PC-9 (cell line): ENCODE measurements at regions of chr11 and their contacts with region 1.

Region 1: GRCh38 chr11:78645226-78646202 is 70.8 kb upstream of the NARS2 start:
- DNase-seq: peak; percentile 54 to 76
- H3K4me3 ChIP-seq: no peak overlapping the region
- H3K27ac ChIP-seq: no peak overlapping the region
- H3K4me1 ChIP-seq: no peaks in the 10 kb centered on the region
- H3K27me3 ChIP-seq: peaks cover 76% of the 10 kb centered on the region
- CTCF ChIP-seq: peak; percentile 100

Region 2: GRCh38 chr11:78715639-78716311 is 70.3 kb after region 1 on chr11:
- CTCF ChIA-PET with region 1: interaction called, 7 read pairs
- POLR2A ChIA-PET with region 1: no interaction called
- intact Hi-C with region 1: loop called (anchors 2 kb)
- DNase-seq: peak; percentile 57 to 75
- H3K4me3 ChIP-seq: no peak overlapping the region
- H3K27ac ChIP-seq: no peak overlapping the region
- H3K4me1 ChIP-seq: no peaks in the 10 kb centered on the region
- H3K27me3 ChIP-seq: peaks cover 54% of the 10 kb centered on the region
- CTCF ChIP-seq: peak; percentile 87

Region 3: DNA sequence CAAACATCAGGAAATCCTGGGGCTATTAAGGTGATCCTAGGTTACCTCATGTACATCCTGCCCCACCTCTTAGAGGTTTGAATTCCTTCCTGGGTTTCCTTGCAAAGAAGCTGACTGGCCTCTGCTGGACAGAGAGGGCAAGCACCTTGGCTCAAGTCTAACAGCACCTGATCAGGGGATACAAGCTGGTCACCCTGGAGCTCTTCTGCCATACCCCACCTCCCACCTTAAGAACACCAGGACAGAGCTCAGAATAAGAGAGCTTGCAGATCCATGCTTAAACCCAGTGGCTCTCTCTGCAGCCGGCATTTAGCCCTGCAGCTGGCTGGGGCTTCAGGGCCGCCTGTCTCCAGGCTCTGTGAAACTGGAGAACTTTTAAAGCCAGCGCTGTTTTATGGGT is 315.7 kb after region 1 on chr11:
- CTCF ChIA-PET with region 1: no interaction called
- POLR2A ChIA-PET with region 1: no interaction called
- intact Hi-C with region 1: loop called (anchors 5 kb)
- DNase-seq: peak in 1 of 2 experiments; percentile 59
- H3K4me3 ChIP-seq: no peak overlapping the region
- H3K27ac ChIP-seq: no peak overlapping the region
- H3K4me1 ChIP-seq: no peaks in the 10 kb centered on the region
- H3K27me3 ChIP-seq: peaks cover 56% of the 10 kb centered on the region
- CTCF ChIP-seq: peak; percentile 60

Region 4: DNA sequence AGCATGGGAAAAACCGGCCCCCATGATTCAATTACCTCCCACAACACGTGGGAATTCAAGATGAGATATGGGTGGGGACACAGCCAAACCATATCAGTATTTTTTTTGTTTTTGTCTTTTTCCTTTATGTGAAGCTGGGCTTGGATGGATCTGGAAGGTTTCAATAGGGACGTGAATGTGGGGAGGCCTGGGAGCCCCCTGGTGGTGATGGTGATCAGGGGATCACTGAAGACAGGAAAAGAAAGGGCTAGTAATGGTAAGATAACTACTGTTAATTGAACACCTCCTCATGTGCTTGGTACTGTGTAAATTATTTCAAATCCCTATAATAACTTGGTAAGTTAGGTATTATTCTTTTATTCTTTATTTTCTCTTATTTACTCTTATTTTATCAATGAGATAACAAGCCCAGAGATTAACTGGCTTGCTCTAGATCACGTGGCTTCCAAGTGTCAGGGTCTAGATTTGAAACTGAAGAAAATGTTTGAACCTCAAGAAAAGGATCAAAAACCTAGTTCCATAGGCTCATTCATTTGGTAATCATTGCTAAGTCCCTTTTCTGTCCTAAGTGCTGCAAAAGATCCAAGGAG is 431.1 kb after region 1 on chr11:
- CTCF ChIA-PET with region 1: interaction called, 6 read pairs
- POLR2A ChIA-PET with region 1: no interaction called
- intact Hi-C with region 1: loop called (anchors 1 kb)
- DNase-seq: peak in 1 of 2 experiments; percentile 26
- H3K4me3 ChIP-seq: no peak overlapping the region
- H3K27ac ChIP-seq: no peak overlapping the region
- H3K4me1 ChIP-seq: no peaks in the 10 kb centered on the region
- H3K27me3 ChIP-seq: peaks cover 37% of the 10 kb centered on the region
- CTCF ChIP-seq: peak; percentile 86

Region 5: DNA sequence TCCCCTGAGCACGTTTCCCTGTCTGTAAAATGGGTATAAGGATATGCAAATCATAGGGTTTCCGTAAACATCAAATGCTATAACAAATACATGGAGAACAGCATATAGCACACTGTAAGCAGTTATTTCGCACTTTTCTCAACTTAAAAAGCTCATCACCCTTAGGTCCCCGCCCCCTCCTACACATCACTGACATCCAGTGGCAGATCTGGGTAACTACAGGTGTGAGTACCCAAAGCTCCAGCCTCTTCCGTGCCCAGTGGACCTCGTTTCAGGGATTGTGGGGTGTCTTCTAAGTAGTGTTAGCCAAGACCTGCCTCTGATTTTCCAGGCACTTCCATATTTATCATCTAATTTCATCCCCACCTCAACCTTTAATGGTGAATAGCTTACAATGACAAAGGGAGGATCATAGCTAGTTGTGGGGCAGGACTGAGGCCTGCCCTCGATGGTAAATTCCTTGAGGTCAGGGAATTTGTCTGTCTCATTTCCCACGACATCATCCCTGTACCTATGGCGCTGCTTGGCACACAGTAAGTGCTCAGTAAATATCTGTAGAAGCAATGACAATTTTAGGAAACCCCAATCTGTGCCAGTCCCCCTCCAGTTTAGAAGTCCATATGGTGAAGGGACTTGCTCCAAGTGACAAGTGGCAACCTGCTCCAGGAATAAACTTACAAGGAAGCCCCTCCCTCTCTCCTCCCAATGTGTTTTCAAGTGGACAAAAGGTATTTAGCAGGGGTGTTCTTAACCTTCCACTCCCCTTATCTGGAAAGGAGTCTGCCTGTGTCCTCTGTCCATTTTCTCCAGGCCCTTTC is 454.8 kb after region 1 on chr11:
- CTCF ChIA-PET with region 1: interaction called, 12 read pairs
- POLR2A ChIA-PET with region 1: no interaction called
- intact Hi-C with region 1: loop called (anchors 2 kb)
- DNase-seq: peak; percentile 35 to 55
- H3K4me3 ChIP-seq: no peak overlapping the region
- H3K27ac ChIP-seq: no peak overlapping the region
- H3K4me1 ChIP-seq: no peaks in the 10 kb centered on the region
- H3K27me3 ChIP-seq: peaks cover 42% of the 10 kb centered on the region
- CTCF ChIP-seq: peak; percentile 94

Region 6: DNA sequence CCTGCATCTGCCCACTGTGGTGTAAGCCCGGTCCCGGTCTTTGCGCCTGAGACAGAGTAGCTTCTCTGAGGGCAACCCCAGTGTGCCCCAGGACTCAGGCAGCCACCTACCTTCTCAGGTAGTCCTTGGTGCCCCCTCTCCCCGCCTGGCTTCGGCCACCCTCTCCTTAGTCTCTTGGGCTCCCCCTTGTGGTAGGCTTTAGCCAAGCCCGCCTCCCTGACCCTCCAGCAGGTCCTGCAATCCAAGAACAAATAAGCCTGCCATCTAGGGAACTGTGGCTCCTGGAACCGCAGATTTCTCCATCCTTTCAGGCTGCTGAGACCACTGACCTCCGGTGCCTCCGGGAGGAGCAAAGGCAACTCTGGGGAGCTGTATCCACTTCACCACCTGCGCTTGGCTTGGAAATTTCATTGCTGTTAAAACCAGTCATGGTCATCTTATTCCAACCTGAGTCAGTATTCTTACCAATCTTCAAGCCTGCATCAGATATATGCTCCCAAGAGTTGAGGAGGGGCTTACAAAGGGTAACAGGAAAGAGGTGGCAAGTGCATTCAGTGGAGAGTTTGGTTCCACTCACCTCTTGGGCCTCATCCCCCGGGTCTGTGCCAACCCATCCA is 848.1 kb after region 1 on chr11:
- CTCF ChIA-PET with region 1: no interaction called
- POLR2A ChIA-PET with region 1: no interaction called
- intact Hi-C with region 1: loop called (anchors 5 kb)
- DNase-seq: peak; percentile 47 to 72
- H3K4me3 ChIP-seq: no peak overlapping the region
- H3K27ac ChIP-seq: no peak overlapping the region
- H3K4me1 ChIP-seq: no peaks in the 10 kb centered on the region
- H3K27me3 ChIP-seq: peaks cover 47% of the 10 kb centered on the region
- CTCF ChIP-seq: peak; percentile 99